ENCODE measurements at regions of chr7 and their contacts with region 1.

Region 1: GRCh38 chr7:95916573-95917297 is 144.4 kb downstream of the DYNC1I1 start:
- DNase-seq: no peak
- H3K4me3 ChIP-seq: peak overlapping the region; percentile 11 to 28 (median 19)
- H3K27ac ChIP-seq: no peak overlapping the region
- H3K4me1 ChIP-seq: peaks cover 0 to 5% (median 0%) of the 10 kb centered on the region in 4 donors
- H3K27me3 ChIP-seq: no peaks in the 10 kb centered on the region
- CTCF ChIP-seq: peak; percentile 82 to 93 (median 91)
- EP300 ChIP-seq: no peak
- POLR2A ChIP-seq: no peak

Region 2: DNA sequence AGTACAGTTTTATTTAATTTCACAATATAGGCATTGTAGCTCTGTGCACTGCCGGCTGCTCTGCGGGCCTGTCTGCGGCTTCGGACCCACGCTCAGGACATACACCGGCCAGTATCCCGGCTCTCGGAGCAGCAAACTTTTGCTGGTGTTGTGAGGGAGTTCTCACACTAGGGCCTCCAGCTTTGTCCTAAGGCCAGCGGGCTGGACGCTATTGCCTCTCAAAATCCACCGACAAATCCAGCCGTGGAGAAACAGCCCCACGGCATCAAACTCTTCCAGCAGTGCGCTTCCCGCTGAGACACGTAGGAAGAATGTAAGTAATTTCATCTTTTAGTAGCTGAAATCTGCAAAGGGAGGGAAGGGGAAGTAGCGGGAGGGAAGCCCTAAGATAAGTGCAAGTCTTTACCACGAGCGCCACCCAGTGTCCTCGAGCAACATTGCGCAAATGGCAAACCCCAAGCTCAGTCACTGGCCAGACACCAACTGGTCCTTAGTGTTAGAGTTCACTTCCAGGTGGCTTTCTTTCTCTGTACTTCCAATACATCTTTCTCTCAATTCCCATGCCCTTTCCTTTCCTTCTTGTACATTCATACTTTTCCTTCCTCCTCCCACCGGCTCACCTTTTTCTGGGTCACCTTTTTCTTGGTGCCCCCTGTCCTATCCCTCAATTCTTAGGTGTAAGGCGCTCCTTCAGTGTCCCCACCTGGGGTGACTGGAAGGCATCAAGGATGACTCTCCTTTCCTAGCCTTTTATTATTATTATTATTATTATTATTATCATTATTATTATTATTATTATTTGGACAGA is 1110.9 kb after region 1 on chr7:
- intact Hi-C with region 1: loop called (anchors 2 kb)
- DNase-seq: peak; percentile 92
- H3K4me3 ChIP-seq: peak overlapping the region; percentile 47 to 53 (median 50)
- H3K27ac ChIP-seq: no peak overlapping the region
- H3K4me1 ChIP-seq: peaks cover 21 to 51% (median 42%) of the 10 kb centered on the region in 4 donors
- H3K27me3 ChIP-seq: peaks cover 0 to 84% (median 35%) of the 10 kb centered on the region in 4 donors
- CTCF ChIP-seq: peak; percentile 69 to 82 (median 82)
- EP300 ChIP-seq: no peak
- POLR2A ChIP-seq: no peak

Region 3: DNA sequence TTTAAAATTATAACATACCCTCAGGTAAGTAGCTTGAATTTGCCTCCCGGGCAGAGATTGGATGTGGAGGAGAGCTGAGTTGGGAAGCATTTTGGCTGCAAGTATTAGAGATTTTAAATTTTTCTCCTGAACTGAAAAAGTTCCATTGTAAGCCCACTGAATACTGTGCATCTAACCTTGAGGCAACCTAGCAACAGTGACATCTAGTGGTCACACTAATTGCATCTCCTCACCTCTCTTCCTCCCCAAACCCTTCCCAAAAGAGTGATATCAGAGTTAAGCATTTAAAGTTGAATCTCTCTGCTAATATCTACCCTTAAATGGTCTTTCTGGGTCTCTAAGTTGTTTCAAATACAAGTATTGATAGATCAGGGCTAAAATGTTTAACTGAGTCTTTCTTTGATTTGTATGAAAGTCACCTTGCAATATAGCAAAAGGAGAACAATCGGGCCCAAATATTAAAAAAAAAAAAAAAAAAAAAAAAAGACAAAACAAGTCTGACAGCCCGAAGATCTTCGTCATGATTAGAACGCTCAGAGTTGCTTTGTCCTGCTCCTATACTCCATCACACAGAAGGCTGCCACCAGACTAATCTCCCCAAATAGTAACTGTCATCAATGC is 1148.3 kb after region 1 on chr7:
- intact Hi-C with region 1: loop called (anchors 5 kb)
- DNase-seq: no peak
- H3K4me3 ChIP-seq: no peak overlapping the region
- H3K27ac ChIP-seq: no peak overlapping the region
- H3K4me1 ChIP-seq: no peaks in the 10 kb centered on the region
- H3K27me3 ChIP-seq: peaks cover 0 to 3% (median 0%) of the 10 kb centered on the region in 4 donors
- CTCF ChIP-seq: peak; percentile 45 to 68 (median 54)
- EP300 ChIP-seq: no peak
- POLR2A ChIP-seq: no peak

Measured in esophagus muscularis mucosa (tissue), 4 donors.